ENCODE measurements at regions of chr2 and their contacts with region 1.

Region 1: DNA sequence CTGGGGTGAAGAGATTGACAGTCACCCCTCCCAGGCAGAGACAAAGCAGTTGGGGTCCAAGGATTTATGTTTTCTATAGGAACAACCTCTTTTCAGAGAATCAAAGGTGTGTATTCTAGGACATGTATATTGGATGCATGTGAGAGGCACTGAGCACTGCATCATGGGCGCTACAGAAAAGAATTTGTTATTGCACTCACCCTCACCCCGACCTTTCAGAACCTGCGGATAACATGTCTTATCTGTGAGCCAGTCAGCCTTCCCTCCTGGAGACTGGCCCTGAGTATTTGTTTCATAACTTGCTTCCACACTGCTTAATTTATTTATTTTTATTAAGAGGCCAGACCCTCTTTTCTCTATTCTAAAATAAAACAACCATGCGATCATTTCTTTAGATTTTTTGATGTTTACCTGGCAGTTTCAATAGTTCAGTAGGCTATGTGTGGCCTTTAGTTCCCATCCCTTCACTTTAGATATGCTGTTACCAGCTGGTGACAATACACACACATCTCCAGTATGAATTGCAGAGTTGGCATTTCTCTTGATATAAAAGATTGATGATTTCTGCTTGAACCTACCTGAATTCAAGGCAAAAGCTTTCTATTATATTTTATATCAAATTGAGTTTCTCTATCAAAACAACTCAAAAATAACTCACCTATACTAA is 29.8 kb downstream of the FABP1 start:
- DNase-seq: no peak
- ATAC-seq: no peak
- H3K4me3 ChIP-seq: no peak overlapping the region
- H3K27ac ChIP-seq: no peak overlapping the region
- H3K4me1 ChIP-seq: peaks cover 7% of the 10 kb centered on the region
- H3K27me3 ChIP-seq: peaks cover 4 to 32% of the 10 kb centered on the region in 2 experiments; a peak in 4 of 5 replicates
- CTCF ChIP-seq: no peak
- EP300 ChIP-seq: no peak
- POLR2A ChIP-seq: no peak
- RAD21 ChIP-seq: no peak

Region 2: GRCh38 chr2:88159955-88160415 is 62.0 kb after region 1 on chr2:
- CTCF ChIA-PET with region 1: interaction called, 3 read pairs
- POLR2A ChIA-PET with region 1: interaction called, 4 read pairs
- in situ Hi-C with region 1: no loop called
- intact Hi-C with region 1: loop called (anchors 2 kb)
- DNase-seq: peak; percentile 82
- ATAC-seq: peak; percentile 85
- H3K4me3 ChIP-seq: peak overlapping the region in 1 of 3 experiments; percentile 35; a peak in 1 of 6 replicates
- H3K27ac ChIP-seq: no peak overlapping the region
- H3K4me1 ChIP-seq: peaks cover 40% of the 10 kb centered on the region
- H3K27me3 ChIP-seq: 0 out of 5 replicates have a peak, but pooled peaks cover 0 to 11% of the 10 kb centered on the region in 2 experiments
- CTCF ChIP-seq: peak; percentile 97
- EP300 ChIP-seq: no peak
- POLR2A ChIP-seq: no peak
- RAD21 ChIP-seq: peak; percentile 97

Measured in HepG2 (cell line).